GM12878 (cell line): ENCODE measurements at regions of chr5 and their contacts with region 1.

Region 1: GRCh38 chr5:169778622-169779596 is 141.8 kb downstream of the DOCK2 start:
- DNase-seq: peak; percentile 87
- ATAC-seq: peak; percentile 97
- H3K4me3 ChIP-seq: no peak overlapping the region
- H3K27ac ChIP-seq: peak overlapping the region; percentile 80
- H3K4me1 ChIP-seq: peaks cover 29% of the 10 kb centered on the region
- H3K27me3 ChIP-seq: no peaks in the 10 kb centered on the region
- CTCF ChIP-seq: no peak
- EP300 ChIP-seq: peak; percentile 60 to 82; a peak in 2 of 4 replicates
- POLR2A ChIP-seq: no peak
- RAD21 ChIP-seq: no peak

Region 2: DNA sequence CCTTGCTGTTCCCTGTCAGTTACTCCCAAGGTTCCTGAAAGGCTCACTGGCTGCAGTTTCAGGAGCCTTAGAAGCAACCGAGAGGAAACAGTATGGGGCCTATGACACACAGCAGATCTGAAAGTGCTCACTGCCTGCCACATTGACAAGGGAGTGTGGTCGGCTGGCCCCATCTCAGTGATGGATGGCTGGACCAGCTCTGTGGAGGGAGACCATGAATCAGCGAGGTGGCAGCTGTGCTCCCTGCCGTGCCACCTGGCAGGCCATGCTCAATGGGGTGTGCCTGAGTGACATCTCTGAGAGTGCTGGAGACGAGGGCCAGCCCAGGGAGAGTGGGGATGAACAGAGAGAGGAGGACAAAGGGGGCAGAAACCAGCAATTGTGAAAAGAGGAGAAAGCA is 92.8 kb before region 1 on chr5:
- CTCF ChIA-PET with region 1: no interaction called
- POLR2A ChIA-PET with region 1: no interaction called
- RAD21 ChIA-PET with region 1: no interaction called
- SMC1A ChIA-PET with region 1: no interaction called
- in situ Hi-C with region 1: no loop called
- intact Hi-C with region 1: no loop called
- DNase-seq: no peak
- ATAC-seq: peak; percentile 80
- H3K4me3 ChIP-seq: no peak overlapping the region
- H3K27ac ChIP-seq: 0 out of 2 replicates have a peak overlapping the region, but pooled peaks have one; percentile 15
- H3K4me1 ChIP-seq: peaks cover 2% of the 10 kb centered on the region; the same call in 1 of the 2 replicates
- H3K27me3 ChIP-seq: no peaks in the 10 kb centered on the region
- CTCF ChIP-seq: no peak
- EP300 ChIP-seq: no peak
- POLR2A ChIP-seq: no peak
- RAD21 ChIP-seq: no peak

Region 3: DNA sequence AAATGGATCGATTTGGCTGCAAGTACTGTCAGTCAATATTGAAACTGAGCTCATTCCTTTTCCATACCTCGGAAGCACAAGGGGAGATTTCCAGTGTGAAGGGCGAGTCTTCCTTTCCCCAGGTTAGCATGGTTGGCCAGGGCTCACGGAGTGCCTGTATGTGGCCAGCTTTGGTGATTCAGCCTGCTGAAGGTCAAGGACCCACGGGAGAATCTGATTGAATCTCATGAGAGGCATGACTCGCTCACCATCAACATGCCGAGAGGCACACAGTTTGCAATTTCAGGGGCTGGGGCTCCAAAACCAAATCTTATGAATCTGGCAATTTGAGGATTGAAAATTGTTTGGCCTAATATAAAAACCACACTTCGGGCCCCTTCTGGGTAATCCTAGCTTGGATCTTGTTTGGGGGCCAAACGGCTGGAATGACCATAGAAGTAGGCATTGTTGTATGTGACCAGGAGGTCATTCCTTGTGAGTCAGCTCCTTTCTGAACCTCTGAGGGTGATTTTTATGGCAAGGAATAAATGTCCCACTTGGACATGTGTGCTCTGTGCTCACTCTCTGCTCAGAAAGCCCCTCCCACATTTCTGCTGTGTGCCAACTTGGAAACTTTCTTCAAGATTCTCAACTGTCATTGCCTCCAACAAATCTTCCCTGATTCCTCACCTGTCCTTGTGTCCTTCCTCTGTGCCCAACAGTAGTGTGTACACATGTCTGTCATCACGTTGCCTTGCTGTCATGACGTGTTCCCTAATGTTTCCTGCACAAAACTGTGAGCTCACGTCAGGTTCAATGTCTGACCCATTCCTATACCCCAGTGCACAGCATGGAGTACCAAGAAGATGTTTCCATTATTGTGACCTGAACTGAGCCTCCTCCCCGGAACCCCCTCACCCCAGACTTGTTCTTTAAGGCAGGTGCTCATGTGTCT is 71.9 kb before region 1 on chr5:
- CTCF ChIA-PET with region 1: interaction called, 20 read pairs
- POLR2A ChIA-PET with region 1: interaction called, 6 read pairs
- RAD21 ChIA-PET with region 1: interaction called, 24 read pairs
- SMC1A ChIA-PET with region 1: interaction called, 33 read pairs
- in situ Hi-C with region 1: no loop called
- intact Hi-C with region 1: no loop called
- DNase-seq: no peak
- ATAC-seq: no peak
- H3K4me3 ChIP-seq: no peak overlapping the region
- H3K27ac ChIP-seq: peak overlapping the region; percentile 60
- H3K4me1 ChIP-seq: peaks cover 45% of the 10 kb centered on the region
- H3K27me3 ChIP-seq: no peaks in the 10 kb centered on the region
- CTCF ChIP-seq: no peak
- EP300 ChIP-seq: no peak
- POLR2A ChIP-seq: no peak
- RAD21 ChIP-seq: no peak

Region 4: DNA sequence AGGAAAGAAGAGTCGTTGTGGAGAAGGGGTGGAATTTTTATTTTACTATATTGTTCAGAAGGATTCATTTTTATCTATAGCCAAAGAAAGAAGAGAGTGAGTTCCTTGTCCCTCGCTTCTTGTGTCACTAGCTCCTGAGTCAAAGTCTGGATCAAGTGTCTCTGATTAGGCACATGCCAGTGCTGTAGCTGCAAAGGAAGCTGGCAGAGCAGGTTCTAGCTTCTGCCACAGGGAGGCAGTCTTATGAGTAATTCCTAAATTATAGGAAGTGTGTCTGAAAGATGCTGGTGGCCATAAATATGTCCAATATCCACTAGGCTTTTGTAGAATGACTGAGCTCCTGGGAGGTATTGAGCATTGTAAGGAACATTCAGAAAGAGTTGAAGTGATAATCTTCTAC is 57.1 kb before region 1 on chr5:
- CTCF ChIA-PET with region 1: no interaction called
- POLR2A ChIA-PET with region 1: interaction called, 4 read pairs
- RAD21 ChIA-PET with region 1: interaction called, 43 read pairs
- SMC1A ChIA-PET with region 1: interaction called, 21 read pairs
- in situ Hi-C with region 1: no loop called
- intact Hi-C with region 1: no loop called
- DNase-seq: no peak
- ATAC-seq: no peak
- H3K4me3 ChIP-seq: no peak overlapping the region
- H3K27ac ChIP-seq: no peak overlapping the region
- H3K4me1 ChIP-seq: peaks cover 17% of the 10 kb centered on the region
- H3K27me3 ChIP-seq: no peaks in the 10 kb centered on the region
- CTCF ChIP-seq: 0 out of 6 replicates have a peak, but pooled peaks of 1 of the 3 experiments have one; percentile 11
- EP300 ChIP-seq: no peak
- POLR2A ChIP-seq: no peak
- RAD21 ChIP-seq: 0 out of 2 replicates have a peak, but pooled peaks have one; percentile 8

Region 5: GRCh38 chr5:169753795-169754194 is 25.1 kb before region 1 on chr5:
- CTCF ChIA-PET with region 1: interaction called, 3 read pairs
- POLR2A ChIA-PET with region 1: interaction called, 6 read pairs
- RAD21 ChIA-PET with region 1: interaction called, 20 read pairs
- SMC1A ChIA-PET with region 1: interaction called, 27 read pairs
- in situ Hi-C with region 1: no loop called
- intact Hi-C with region 1: no loop called
- DNase-seq: no peak
- ATAC-seq: peak; percentile 18; the same call in 2 of the 3 replicates
- H3K4me3 ChIP-seq: no peak overlapping the region
- H3K27ac ChIP-seq: no peak overlapping the region
- H3K4me1 ChIP-seq: no peaks in the 10 kb centered on the region
- H3K27me3 ChIP-seq: no peaks in the 10 kb centered on the region
- CTCF ChIP-seq: no peak
- EP300 ChIP-seq: no peak
- POLR2A ChIP-seq: no peak
- RAD21 ChIP-seq: no peak

Region 6: GRCh38 chr5:169796731-169797130 is 17.8 kb after region 1 on chr5:
- CTCF ChIA-PET with region 1: interaction called, 4 read pairs
- POLR2A ChIA-PET with region 1: interaction called, 19 read pairs
- RAD21 ChIA-PET with region 1: interaction called, 30 read pairs
- SMC1A ChIA-PET with region 1: interaction called, 368 read pairs
- in situ Hi-C with region 1: no loop called
- intact Hi-C with region 1: loop called (anchors 1 kb)
- DNase-seq: no peak
- ATAC-seq: no peak
- H3K4me3 ChIP-seq: no peak overlapping the region
- H3K27ac ChIP-seq: no peak overlapping the region
- H3K4me1 ChIP-seq: peaks cover 13% of the 10 kb centered on the region
- H3K27me3 ChIP-seq: no peaks in the 10 kb centered on the region
- CTCF ChIP-seq: no peak
- EP300 ChIP-seq: no peak
- POLR2A ChIP-seq: no peak
- RAD21 ChIP-seq: no peak

Region 7: GRCh38 chr5:169838688-169839087 is 59.8 kb after region 1 on chr5:
- CTCF ChIA-PET with region 1: interaction called, 3 read pairs
- POLR2A ChIA-PET with region 1: no interaction called
- RAD21 ChIA-PET with region 1: interaction called, 11 read pairs
- SMC1A ChIA-PET with region 1: interaction called, 4 read pairs
- in situ Hi-C with region 1: no loop called
- intact Hi-C with region 1: no loop called
- DNase-seq: peak; percentile 45
- ATAC-seq: peak; percentile 92
- H3K4me3 ChIP-seq: no peak overlapping the region
- H3K27ac ChIP-seq: peak overlapping the region; percentile 76
- H3K4me1 ChIP-seq: peaks cover 28% of the 10 kb centered on the region
- H3K27me3 ChIP-seq: no peaks in the 10 kb centered on the region
- CTCF ChIP-seq: no peak
- EP300 ChIP-seq: no peak; a peak in 1 of 4 replicates
- POLR2A ChIP-seq: no peak
- RAD21 ChIP-seq: no peak

Region 8: GRCh38 chr5:170080217-170080616 is 301.3 kb after region 1 on chr5:
- CTCF ChIA-PET with region 1: no interaction called
- POLR2A ChIA-PET with region 1: no interaction called
- RAD21 ChIA-PET with region 1: no interaction called
- SMC1A ChIA-PET with region 1: no interaction called
- in situ Hi-C with region 1: no loop called
- intact Hi-C with region 1: no loop called
- DNase-seq: no peak
- ATAC-seq: no peak
- H3K4me3 ChIP-seq: no peak overlapping the region
- H3K27ac ChIP-seq: no peak overlapping the region
- H3K4me1 ChIP-seq: no peaks in the 10 kb centered on the region
- H3K27me3 ChIP-seq: no peaks in the 10 kb centered on the region
- CTCF ChIP-seq: no peak
- EP300 ChIP-seq: no peak
- POLR2A ChIP-seq: no peak
- RAD21 ChIP-seq: no peak